H1 (cell line): ENCODE measurements at regions of chr2 and their contacts with region 1.

Region 1: DNA sequence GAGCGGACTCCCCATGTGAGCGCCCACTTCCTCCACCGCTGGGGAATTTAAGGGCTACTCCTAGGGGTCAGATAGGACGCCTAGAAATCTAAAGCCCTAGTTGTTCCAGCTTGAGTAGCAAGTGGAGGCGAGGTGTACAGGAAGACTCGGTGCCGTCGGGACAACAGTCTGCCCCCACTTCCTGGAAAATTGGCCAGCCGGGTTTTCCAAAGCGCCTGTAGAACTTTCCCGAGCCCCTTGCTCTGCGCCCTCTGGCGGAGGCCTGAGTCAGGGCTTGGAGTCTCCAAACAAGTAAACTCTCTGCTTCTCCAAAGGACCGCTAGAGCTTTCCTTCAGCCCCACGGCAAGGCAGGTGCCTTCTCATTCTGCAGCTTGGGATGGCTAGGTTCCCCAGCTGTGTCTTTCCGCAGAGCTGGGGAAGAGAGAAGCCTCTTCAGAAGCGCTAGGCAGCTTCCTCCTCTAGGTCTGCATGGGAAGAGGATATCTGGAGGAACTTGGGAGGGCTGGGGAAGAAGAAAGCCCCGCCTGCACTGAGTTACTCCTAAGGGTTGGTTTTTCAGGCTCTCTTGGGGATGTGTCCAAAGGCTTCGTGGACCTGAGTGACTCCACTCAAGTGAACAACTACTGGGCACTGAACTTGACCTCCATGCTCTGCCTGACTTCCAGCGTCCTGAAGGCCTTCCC is 688 bp downstream of the SPR start:
- DNase-seq: peak; percentile 81 to 96
- H3K4me3 ChIP-seq: peak overlapping the region; percentile 47 to 68 (median 65)
- H3K27ac ChIP-seq: no peak overlapping the region
- H3K4me1 ChIP-seq: peaks cover 0 to 8% (median 1%) of the 10 kb centered on the region in 4 experiments; a peak in 5 of 7 replicates
- H3K27me3 ChIP-seq: peaks cover 4 to 36% (median 24%) of the 10 kb centered on the region in 4 experiments
- CTCF ChIP-seq: peak; percentile 79 to 98 (median 97)
- EP300 ChIP-seq: no peak; a peak in 1 of 3 replicates
- POLR2A ChIP-seq: no peak
- RAD21 ChIP-seq: peak; percentile 41 to 65

Region 2: DNA sequence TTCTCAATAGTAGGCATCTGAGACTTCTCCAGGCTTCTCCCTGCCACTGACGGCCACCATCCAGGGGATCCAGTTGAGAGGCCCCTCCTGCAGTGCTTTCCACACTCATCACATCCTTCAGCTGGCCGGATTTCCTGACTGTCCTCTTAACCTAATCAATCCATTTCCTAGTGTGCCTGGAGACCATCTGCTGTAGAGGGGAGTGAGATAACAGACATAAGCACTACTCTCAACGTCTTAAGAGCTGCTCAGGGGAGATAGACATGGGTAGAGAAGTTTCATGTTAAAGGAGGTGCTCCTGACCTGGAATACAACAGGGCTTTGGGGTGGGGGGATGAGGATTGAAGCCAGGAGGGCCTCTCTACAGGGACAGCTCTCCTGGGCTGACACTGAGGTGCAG is 13.5 kb after region 1 on chr2:
- CTCF ChIA-PET with region 1: interaction called, 497 read pairs
- POLR2A ChIA-PET with region 1: interaction called, 3 read pairs
- DNase-seq: no peak
- H3K4me3 ChIP-seq: no peak overlapping the region
- H3K27ac ChIP-seq: no peak overlapping the region
- H3K4me1 ChIP-seq: no peaks in the 10 kb centered on the region
- H3K27me3 ChIP-seq: peaks cover 0 to 20% (median 11%) of the 10 kb centered on the region in 4 experiments; a peak in 5 of 7 replicates
- CTCF ChIP-seq: no peak
- EP300 ChIP-seq: no peak
- POLR2A ChIP-seq: no peak
- RAD21 ChIP-seq: no peak

Region 3: DNA sequence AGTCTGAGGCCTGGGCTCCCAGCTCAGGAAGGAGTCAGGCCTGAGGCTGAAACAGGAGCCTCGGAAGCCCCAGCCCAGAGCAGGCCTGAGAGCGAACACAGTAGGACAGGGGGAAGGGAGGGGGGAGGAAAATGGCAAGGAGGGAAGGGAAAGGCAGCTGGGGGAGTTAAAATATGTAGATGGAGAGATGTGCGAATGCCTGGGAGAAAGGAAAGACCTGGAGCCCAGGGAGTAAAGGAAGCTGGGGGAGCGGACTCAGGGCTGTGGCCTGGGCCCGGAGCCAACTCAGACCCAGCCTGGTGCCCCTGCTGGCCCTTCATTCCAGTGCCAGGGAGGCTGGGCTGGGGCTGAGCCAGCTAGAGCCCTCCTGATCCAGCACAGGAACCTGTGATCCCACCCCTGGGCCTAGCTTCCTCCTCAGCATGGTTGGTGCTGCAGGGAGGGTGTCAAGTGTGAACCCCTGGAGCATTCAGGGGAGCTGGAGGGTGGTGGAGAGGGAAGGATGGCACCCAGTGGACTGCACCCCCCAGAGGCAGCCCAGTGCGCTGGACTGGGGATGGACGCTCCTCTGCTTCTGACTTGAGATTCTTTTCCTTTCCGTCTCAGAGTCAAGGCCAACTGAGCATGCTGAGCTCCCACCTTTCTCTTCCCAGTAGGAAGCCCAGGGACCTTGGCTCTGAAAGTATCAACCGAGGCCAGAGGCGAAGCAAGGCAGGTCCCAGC is 75.7 kb after region 1 on chr2:
- CTCF ChIA-PET with region 1: interaction called, 166 read pairs
- POLR2A ChIA-PET with region 1: no interaction called
- DNase-seq: peak; percentile 61 to 76
- H3K4me3 ChIP-seq: 0 out of 8 replicates have a peak overlapping the region, but pooled peaks of 1 of the 4 experiments have one; percentile 2
- H3K27ac ChIP-seq: peak overlapping the region; percentile 49; the same call in 1 of the 2 replicates
- H3K4me1 ChIP-seq: peaks cover 12 to 26% (median 22%) of the 10 kb centered on the region in 4 experiments
- H3K27me3 ChIP-seq: peaks cover 0 to 5% (median 0%) of the 10 kb centered on the region in 4 experiments; a peak in 1 of 7 replicates
- CTCF ChIP-seq: no peak
- EP300 ChIP-seq: peak in 1 of 2 experiments; percentile 69; a peak in 1 of 3 replicates
- POLR2A ChIP-seq: no peak
- RAD21 ChIP-seq: peak; percentile 17 to 30; a peak in 3 of 4 replicates

Region 4: GRCh38 chr2:72993147-72993932 is 105.4 kb after region 1 on chr2:
- CTCF ChIA-PET with region 1: interaction called, 86 read pairs
- POLR2A ChIA-PET with region 1: no interaction called
- DNase-seq: peak in 1 of 2 experiments; percentile 82
- H3K4me3 ChIP-seq: no peak overlapping the region
- H3K27ac ChIP-seq: no peak overlapping the region
- H3K4me1 ChIP-seq: peaks cover 0 to 2% (median 0%) of the 10 kb centered on the region in 4 experiments; a peak in 3 of 7 replicates
- H3K27me3 ChIP-seq: no peaks in the 10 kb centered on the region; a peak in 3 of 7 replicates
- CTCF ChIP-seq: peak; percentile 62 to 81 (median 71)
- EP300 ChIP-seq: no peak
- POLR2A ChIP-seq: no peak
- RAD21 ChIP-seq: peak; percentile 69 to 74

Region 5: DNA sequence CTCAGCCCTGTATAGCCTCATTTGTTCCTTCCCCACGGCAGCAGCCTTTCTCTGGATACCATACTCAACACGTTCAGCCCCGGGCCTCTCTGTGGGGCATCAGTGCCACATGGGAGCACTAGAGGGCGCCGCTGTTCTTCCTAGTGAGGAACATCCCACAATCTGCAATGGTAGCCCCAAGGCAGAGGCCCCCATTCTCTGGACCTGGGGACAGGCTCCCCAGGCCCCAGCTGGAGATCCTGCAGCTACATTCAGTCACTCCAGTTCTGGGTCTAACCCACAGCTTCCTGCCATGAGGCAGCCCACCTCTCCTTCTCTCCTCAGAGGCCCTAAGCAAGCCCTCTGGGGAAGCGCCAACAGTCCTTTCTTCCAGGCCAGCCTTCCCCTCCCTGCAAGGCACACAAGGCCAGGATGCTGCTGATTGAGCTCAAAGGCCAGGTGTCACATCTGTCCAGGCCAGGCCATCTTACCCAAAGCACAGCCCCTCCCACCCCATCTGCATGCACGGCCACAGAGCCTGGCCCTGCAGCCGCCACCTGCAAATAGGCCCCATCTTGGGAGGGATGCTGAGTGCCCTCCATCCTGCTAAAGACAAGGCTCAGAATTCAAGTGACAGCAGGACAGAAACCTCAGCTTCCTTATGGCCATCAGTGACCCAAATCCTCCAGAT is 197.9 kb after region 1 on chr2:
- CTCF ChIA-PET with region 1: interaction called, 95 read pairs
- POLR2A ChIA-PET with region 1: no interaction called
- DNase-seq: peak; percentile 57 to 96
- H3K4me3 ChIP-seq: no peak overlapping the region
- H3K27ac ChIP-seq: no peak overlapping the region
- H3K4me1 ChIP-seq: peaks cover 0 to 9% (median 5%) of the 10 kb centered on the region in 4 experiments; a peak in 6 of 7 replicates
- H3K27me3 ChIP-seq: no peaks in the 10 kb centered on the region
- CTCF ChIP-seq: peak; percentile 94 to 95 (median 95)
- EP300 ChIP-seq: no peak
- POLR2A ChIP-seq: no peak
- RAD21 ChIP-seq: peak; percentile 97 to 98

Region 6: GRCh38 chr2:73212448-73213176 is 324.7 kb after region 1 on chr2:
- CTCF ChIA-PET with region 1: interaction called, 21 read pairs
- POLR2A ChIA-PET with region 1: no interaction called
- DNase-seq: peak in 1 of 2 experiments; percentile 90
- H3K4me3 ChIP-seq: no peak overlapping the region
- H3K27ac ChIP-seq: no peak overlapping the region
- H3K4me1 ChIP-seq: peaks cover 2 to 3% (median 3%) of the 10 kb centered on the region in 4 experiments; a peak in 4 of 7 replicates
- H3K27me3 ChIP-seq: peaks cover 0 to 4% (median 2%) of the 10 kb centered on the region in 4 experiments; a peak in 1 of 7 replicates
- CTCF ChIP-seq: peak; percentile 85 to 98 (median 97)
- EP300 ChIP-seq: no peak
- POLR2A ChIP-seq: no peak
- RAD21 ChIP-seq: peak; percentile 79 to 87